Activated CD4-positive, alpha-beta memory T cell treated with anti-CD3 and anti-CD28 coated beads, Interleukin-2, amount 10 ng/mL, durations not matched to agents 7 days and 5 days (primary cell): ENCODE measurements at regions of chr6 and their contacts with region 1.

Region 1: DNA sequence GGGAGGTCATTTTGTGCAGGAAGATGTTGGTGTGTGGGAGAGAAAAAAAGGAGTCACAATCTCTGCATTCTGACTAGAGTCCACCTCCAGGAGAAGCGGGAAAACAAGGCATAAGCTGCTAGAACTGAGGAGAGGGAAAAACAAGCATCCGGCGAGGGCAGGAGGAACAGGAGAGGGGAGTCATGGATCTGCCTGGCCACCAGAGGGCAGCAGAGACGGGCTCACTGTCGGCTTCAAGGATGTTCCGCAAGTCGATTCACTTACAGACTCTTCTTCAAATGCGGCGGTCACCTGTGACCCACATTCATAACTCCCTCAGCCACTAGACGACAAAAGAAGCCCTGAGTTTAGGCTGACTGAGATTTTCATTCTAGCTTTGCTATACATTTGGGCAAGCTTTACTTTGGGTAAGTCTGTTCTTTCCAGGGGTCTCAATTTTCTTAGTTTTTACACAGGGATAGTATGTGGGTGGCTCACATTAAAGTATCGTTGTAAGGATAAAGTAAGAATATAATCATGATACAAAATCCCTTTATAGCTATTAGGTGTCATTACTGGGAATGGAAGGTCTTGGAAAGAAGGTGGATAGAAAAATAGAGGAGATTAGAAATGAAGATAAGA is 6.6 kb upstream of the BTNL2 start:
- DNase-seq: peak; percentile 87
- H3K4me3 Mint-ChIP-seq: no peak overlapping the region
- H3K27ac Mint-ChIP-seq: no peak overlapping the region
- H3K4me1 Mint-ChIP-seq: peaks cover 10% of the 10 kb centered on the region
- H3K27me3 Mint-ChIP-seq: peaks cover 59% of the 10 kb centered on the region

Region 2: DNA sequence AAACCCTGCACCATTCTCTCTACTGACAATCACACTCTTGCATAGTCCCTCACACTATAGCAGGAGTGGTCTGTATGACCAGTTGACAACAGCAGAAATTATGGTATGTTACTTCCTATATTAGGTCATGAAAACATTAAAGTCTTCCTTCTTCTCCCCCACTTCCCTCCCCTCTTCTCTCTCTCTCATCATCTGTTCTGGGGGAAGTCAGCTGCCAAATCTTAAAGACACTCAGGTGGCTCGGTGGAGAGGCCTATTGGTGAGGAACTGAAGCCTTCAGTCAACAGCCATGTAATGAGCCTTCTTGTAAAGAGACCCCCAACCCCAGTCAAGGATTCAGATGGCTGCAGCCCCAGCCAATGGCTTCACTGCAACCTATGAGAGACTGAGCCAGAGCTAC is 30.8 kb before region 1 on chr6:
- CTCF ChIA-PET with region 1: no interaction called
- POLR2A ChIA-PET with region 1: no interaction called
- DNase-seq: no peak
- H3K4me3 Mint-ChIP-seq: no peak overlapping the region
- H3K27ac Mint-ChIP-seq: no peak overlapping the region
- H3K4me1 Mint-ChIP-seq: no peaks in the 10 kb centered on the region
- H3K27me3 Mint-ChIP-seq: peaks cover 26% of the 10 kb centered on the region

Region 3: DNA sequence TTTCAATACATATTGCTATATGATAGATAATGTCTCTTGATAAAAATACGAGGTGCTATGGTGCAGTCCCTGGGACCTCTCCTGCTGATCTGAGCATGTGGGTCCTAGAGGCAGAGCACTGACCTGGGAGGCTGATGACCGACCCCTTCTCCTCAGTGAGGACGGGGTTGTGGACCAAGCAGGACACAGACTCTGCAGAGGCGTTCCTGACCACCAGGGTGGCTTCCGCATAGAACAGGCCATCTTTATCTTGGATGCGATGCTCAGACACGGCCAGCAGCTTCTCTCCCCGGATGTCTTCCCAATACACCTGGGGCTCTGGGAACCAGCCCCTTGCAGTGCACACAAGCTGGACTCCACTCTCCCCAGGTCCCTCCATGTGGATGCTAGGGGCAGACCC is 10.7 kb before region 1 on chr6:
- CTCF ChIA-PET with region 1: interaction called, 12 read pairs
- POLR2A ChIA-PET with region 1: no interaction called
- DNase-seq: no peak
- H3K4me3 Mint-ChIP-seq: no peak overlapping the region
- H3K27ac Mint-ChIP-seq: no peak overlapping the region
- H3K4me1 Mint-ChIP-seq: no peaks in the 10 kb centered on the region
- H3K27me3 Mint-ChIP-seq: peaks cover 47% of the 10 kb centered on the region

Region 4: GRCh38 chr6:32424589-32425300 is 11.2 kb after region 1 on chr6:
- CTCF ChIA-PET with region 1: interaction called, 11 read pairs
- POLR2A ChIA-PET with region 1: no interaction called
- DNase-seq: no peak
- H3K4me3 Mint-ChIP-seq: no peak overlapping the region
- H3K27ac Mint-ChIP-seq: no peak overlapping the region
- H3K4me1 Mint-ChIP-seq: peaks cover under 1% of the 10 kb centered on the region
- H3K27me3 Mint-ChIP-seq: peaks cover 43% of the 10 kb centered on the region

Region 5: DNA sequence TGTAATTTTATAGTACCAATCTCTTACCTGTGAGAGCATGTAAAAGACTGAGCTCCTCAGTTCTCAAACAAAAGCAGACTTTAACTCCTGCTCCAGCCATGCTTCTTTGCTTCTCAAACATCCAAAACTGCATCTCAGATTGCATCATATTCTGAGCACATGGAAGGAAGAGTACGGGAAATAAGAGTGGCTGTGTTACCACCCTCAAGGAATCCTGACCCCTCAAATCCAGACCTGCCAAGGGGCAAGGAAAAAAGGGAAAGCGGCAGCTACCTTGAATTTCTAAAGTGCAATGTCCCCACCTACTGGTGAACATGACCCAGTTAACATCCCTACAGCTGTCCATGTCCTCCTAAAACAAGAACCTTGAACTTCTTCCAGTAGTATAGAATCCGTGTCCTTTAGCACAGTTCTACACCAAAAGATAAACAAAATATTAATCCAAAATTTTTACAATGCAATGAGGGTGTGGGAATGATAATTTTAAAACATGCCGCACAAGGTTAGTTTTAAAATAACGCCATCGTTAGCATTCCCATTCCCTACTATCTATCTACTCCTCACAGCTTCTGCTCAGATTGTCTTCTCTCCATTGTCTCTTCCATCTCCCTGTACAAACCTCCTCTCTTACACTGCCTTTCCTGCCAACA is 287.0 kb after region 1 on chr6:
- CTCF ChIA-PET with region 1: interaction called, 22 read pairs
- POLR2A ChIA-PET with region 1: no interaction called
- DNase-seq: peak; percentile 33
- H3K4me3 Mint-ChIP-seq: no peak overlapping the region
- H3K27ac Mint-ChIP-seq: no peak overlapping the region
- H3K4me1 Mint-ChIP-seq: no peaks in the 10 kb centered on the region
- H3K27me3 Mint-ChIP-seq: peaks cover 66% of the 10 kb centered on the region

Region 6: GRCh38 chr6:32785781-32786533 is 372.4 kb after region 1 on chr6:
- CTCF ChIA-PET with region 1: interaction called, 113 read pairs
- POLR2A ChIA-PET with region 1: no interaction called
- DNase-seq: peak; percentile 43
- H3K4me3 Mint-ChIP-seq: no peak overlapping the region
- H3K27ac Mint-ChIP-seq: no peak overlapping the region
- H3K4me1 Mint-ChIP-seq: peaks cover 3% of the 10 kb centered on the region
- H3K27me3 Mint-ChIP-seq: peaks cover 63% of the 10 kb centered on the region

Region 7: DNA sequence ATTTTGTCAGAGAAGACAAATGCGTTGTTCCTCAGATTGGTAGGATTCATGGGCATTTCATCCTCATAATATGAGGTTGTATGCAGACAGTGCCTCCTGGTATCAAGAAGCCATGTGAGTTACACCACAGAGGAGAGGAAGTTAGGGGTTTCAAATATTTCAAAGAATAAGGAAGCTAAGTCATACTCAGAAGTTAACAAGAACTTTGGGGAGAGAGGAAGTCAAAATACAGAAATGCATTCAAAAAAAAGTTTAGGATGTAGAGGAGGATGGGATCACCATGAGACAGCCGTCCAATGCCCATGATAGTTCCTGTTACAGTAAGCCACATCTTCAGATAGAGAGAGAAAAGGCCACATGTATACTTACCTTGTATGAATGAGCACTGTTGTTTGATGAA is 381.0 kb after region 1 on chr6:
- CTCF ChIA-PET with region 1: interaction called, 113 read pairs
- POLR2A ChIA-PET with region 1: no interaction called
- DNase-seq: no peak
- H3K4me3 Mint-ChIP-seq: no peak overlapping the region
- H3K27ac Mint-ChIP-seq: no peak overlapping the region
- H3K4me1 Mint-ChIP-seq: peaks cover 25% of the 10 kb centered on the region
- H3K27me3 Mint-ChIP-seq: peaks cover 79% of the 10 kb centered on the region